ENCODE measurements at regions of chr9 and their contacts with region 1.

Region 1: DNA sequence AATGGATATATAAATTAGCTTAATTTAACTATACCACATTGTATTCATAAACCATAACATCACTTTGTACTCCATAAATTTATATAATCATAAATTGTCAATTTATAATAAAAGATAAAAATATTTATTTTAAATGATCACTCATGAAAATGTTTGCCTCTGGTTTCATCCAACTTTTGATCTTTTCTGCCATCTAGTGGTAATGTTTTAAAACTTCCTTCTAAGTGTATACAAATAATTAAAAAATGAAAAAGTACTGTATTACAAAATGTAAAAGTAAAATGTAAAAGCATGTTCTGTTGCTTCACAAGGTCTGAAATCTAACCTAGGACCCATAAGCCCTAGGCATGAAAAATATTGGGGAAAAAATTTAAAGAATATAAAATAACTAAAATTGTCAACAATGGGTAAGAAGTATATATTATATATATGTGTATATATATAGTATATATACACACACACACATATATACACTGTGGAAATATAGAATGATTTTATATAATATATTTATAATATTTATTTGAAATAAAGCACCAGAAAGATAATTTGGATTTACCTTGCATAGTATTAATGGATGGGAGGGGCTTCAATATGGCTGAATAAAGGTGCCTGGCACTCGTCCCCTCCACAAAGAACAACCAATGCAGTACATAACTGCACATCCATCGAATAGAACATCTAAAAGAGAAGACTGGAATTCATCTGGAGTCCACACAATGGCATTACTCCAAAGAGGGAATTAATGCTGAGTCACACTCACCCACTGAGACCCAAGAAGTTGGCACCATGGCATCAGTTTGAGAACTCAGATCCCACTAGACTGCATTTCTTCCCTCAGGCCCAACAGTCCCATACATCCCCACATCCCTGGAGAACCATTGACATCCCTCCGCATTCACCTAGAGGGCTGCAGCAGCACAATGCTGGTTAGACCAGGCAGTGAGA is 32.5 kb downstream of the ANXA1 start:
- DNase-seq: no peak
- H3K4me3 ChIP-seq: no peak overlapping the region
- H3K4me3 Mint-ChIP-seq: no peak overlapping the region
- H3K27ac Mint-ChIP-seq: no peak overlapping the region
- H3K4me1 ChIP-seq: no peaks in the 10 kb centered on the region
- H3K4me1 Mint-ChIP-seq: no peaks in the 10 kb centered on the region
- H3K27me3 ChIP-seq: no peaks in the 10 kb centered on the region
- H3K27me3 Mint-ChIP-seq: no peaks in the 10 kb centered on the region
- CTCF ChIP-seq: no peak

Region 2: DNA sequence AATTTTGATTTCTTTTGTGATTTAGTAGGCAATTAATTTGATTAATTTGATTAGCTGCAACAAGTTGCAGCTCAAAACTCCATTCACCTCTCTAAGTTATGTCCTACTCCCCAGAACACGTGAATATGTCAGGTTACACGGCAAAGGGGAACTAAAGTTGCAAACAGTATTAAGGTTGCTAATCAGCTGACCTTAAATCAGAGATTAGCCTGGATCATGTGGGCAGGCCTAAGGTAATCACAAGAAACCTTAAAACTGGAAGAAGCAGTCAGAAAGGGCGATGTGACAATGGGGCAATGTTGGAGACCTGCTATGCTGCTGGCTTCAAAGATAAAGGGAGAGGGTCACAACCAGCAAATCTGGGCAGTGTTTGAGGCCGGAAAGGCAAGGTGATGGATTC is 79.8 kb before region 1 on chr9:
- CTCF ChIA-PET with region 1: no interaction called
- POLR2A ChIA-PET with region 1: no interaction called
- intact Hi-C with region 1: loop called (anchors 1 kb)
- DNase-seq: no peak
- H3K4me3 ChIP-seq: no peak overlapping the region
- H3K4me3 Mint-ChIP-seq: no peak overlapping the region
- H3K27ac Mint-ChIP-seq: no peak overlapping the region
- H3K4me1 ChIP-seq: no peaks in the 10 kb centered on the region
- H3K4me1 Mint-ChIP-seq: no peaks in the 10 kb centered on the region
- H3K27me3 ChIP-seq: no peaks in the 10 kb centered on the region
- H3K27me3 Mint-ChIP-seq: no peaks in the 10 kb centered on the region
- CTCF ChIP-seq: no peak